ENCODE measurements at regions of chr7 and their contacts with region 1.

Region 1: GRCh38 chr7:158428837-158429753 is 158.5 kb downstream of the PTPRN2 start:
- DNase-seq: no peak
- H3K4me3 ChIP-seq: no peak overlapping the region
- H3K27ac ChIP-seq: no peak overlapping the region
- H3K4me1 ChIP-seq: peaks cover 9 to 22% (median 18%) of the 10 kb centered on the region in 4 donors
- H3K27me3 ChIP-seq: no peaks in the 10 kb centered on the region
- CTCF ChIP-seq: no peak
- EP300 ChIP-seq: no peak
- POLR2A ChIP-seq: no peak

Region 2: GRCh38 chr7:158366346-158366745 is 62.7 kb before region 1 on chr7:
- in situ Hi-C with region 1: no loop called
- intact Hi-C with region 1: no loop called
- DNase-seq: no peak
- H3K4me3 ChIP-seq: no peak overlapping the region
- H3K27ac ChIP-seq: no peak overlapping the region
- H3K4me1 ChIP-seq: no peaks in the 10 kb centered on the region
- H3K27me3 ChIP-seq: no peaks in the 10 kb centered on the region
- CTCF ChIP-seq: no peak
- EP300 ChIP-seq: no peak
- POLR2A ChIP-seq: no peak

Region 3: GRCh38 chr7:158399762-158400161 is 29.3 kb before region 1 on chr7:
- in situ Hi-C with region 1: no loop called
- intact Hi-C with region 1: loop called (anchors 1 kb)
- DNase-seq: no peak
- H3K4me3 ChIP-seq: no peak overlapping the region
- H3K27ac ChIP-seq: no peak overlapping the region
- H3K4me1 ChIP-seq: peaks cover 0 to 19% (median 9%) of the 10 kb centered on the region in 4 donors
- H3K27me3 ChIP-seq: no peaks in the 10 kb centered on the region
- CTCF ChIP-seq: no peak
- EP300 ChIP-seq: no peak
- POLR2A ChIP-seq: no peak

Measured in transverse colon (tissue), 4 donors.